Heart left ventricle (tissue), 16 donors: ENCODE measurements at regions of chr19 and their contacts with region 1.

Region 1: DNA sequence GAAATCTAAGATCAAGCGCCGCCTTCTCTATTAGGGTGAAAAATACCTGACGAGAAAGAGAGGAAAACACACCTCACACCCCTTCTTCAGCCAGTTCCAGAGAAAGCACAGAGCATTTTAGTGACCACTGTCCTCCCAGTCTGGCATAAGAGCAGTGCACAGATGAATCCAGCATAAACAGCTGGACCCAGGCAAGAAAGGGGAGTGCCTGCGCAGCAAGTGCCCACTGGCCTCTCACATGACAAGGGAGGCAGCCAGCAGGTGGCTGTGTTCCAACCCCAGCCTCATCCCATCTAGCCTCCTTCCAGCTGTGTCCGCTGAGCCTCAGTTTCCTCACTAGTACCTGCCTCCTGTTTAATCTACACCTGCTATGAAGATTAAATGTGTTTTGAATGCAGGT is 8.0 kb downstream of the MED26 start:
- DNase-seq: no peak
- ATAC-seq: no peak
- H3K4me3 ChIP-seq: no peak overlapping the region
- H3K27ac ChIP-seq: peak overlapping the region in 1 of 12 donors; percentile 9
- H3K4me1 ChIP-seq: peaks cover 0 to 91% (median 39%) of the 10 kb centered on the region in 12 donors
- H3K27me3 ChIP-seq: no peaks in the 10 kb centered on the region
- CTCF ChIP-seq: no peak
- POLR2A ChIP-seq: no peak

Region 2: DNA sequence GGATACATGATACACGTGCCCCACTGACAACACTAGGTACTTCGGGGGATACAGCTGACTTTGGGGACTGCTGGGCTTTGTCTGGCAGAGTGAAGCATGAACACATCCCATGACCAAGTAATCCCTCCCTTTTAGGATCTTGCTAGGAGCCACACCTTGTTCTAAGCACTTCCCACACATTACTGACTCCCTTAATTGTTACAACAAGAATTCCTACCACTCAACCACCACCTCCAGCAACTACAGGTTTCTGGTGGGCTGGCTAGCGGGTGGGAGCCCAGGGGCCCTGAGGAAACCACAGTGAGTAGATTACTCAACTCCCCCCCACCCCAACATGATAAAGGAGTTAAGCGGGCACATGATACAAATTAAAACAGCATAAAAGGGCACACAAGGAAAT is 40.6 kb before region 1 on chr19:
- intact Hi-C with region 1: loop called in 6 of 10 experiments (anchors 5 kb)
- DNase-seq: no peak
- ATAC-seq: no peak
- H3K4me3 ChIP-seq: no peak overlapping the region
- H3K27ac ChIP-seq: no peak overlapping the region
- H3K4me1 ChIP-seq: peaks cover 4 to 72% (median 44%) of the 10 kb centered on the region in 12 donors
- H3K27me3 ChIP-seq: no peaks in the 10 kb centered on the region
- CTCF ChIP-seq: no peak
- POLR2A ChIP-seq: no peak

Region 3: DNA sequence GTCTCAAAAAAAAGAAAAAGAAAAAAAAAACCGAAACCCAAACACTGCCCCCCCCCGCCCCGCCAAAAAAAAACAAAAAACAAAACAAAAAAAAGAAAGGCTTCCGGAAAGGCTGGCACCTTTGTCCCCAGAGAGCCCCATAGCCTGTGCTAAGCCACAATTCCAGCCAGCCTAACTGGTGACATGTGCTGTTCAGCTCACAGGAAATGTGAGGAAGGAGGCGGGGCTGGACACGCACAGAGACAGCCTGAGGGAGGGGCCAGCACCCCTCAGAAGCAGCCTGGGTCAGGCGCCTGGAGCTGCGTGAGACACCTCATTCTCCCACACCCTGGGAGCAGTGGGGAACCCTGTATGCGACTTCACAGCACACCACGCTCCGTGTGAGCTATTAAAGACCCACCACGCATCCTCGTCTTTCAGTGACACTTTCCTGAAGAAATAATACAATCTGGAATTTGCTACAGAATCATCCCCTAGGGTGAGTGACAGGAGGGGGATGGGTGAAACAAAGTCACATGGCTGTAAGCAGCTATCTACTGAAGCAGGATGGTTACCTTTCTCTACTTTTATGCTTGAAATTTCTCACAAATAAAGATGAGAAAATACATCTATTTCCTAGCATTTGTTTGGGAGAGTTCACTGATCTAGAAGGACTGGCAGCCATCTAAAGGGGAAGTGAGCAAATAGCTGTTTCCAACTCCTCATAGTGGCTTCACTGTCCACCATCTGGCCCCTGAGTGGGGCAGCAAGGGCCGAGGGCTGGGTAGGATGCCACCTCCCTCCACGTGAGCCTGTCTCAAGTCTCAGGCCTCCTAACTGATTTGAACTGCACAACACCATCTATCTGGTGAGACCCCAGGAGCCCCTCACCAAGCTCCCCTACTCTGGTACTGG is 35.5 kb before region 1 on chr19:
- intact Hi-C with region 1: loop called in 5 of 10 experiments (anchors 5 kb)
- DNase-seq: peak; percentile 84 to 89 (median 88)
- ATAC-seq: peak; percentile 62 to 86 (median 70)
- H3K4me3 ChIP-seq: peak overlapping the region in 8 of 12 donors; percentile 7 to 56 (median 16)
- H3K27ac ChIP-seq: peak overlapping the region in 11 of 12 donors; percentile 7 to 87 (median 55)
- H3K4me1 ChIP-seq: peaks cover 21 to 99% (median 87%) of the 10 kb centered on the region in 12 donors
- H3K27me3 ChIP-seq: no peaks in the 10 kb centered on the region
- CTCF ChIP-seq: no peak
- POLR2A ChIP-seq: no peak